Heart right ventricle (tissue), 16 donors: ENCODE measurements at regions of chr20 and their contacts with region 1.

Region 1: GRCh38 chr20:47886460-47887041 is 101.3 kb upstream of the SULF2 start:
- DNase-seq: no peak
- ATAC-seq: no peak
- H3K4me3 ChIP-seq: no peak overlapping the region
- H3K27ac ChIP-seq: no peak overlapping the region
- H3K4me1 ChIP-seq: no peaks in the 10 kb centered on the region
- H3K27me3 ChIP-seq: peaks cover 0 to 27% (median 12%) of the 10 kb centered on the region in 7 donors
- CTCF ChIP-seq: no peak

Region 2: GRCh38 chr20:47772995-47773716 is 113.4 kb before region 1 on chr20:
- intact Hi-C with region 1: no loop called
- DNase-seq: peak; percentile 54 to 58
- ATAC-seq: peak; percentile 61 to 88 (median 80)
- H3K4me3 ChIP-seq: no peak overlapping the region
- H3K27ac ChIP-seq: peak overlapping the region in 9 of 10 donors; percentile 53 to 85 (median 72)
- H3K4me1 ChIP-seq: peaks cover 0 to 79% (median 46%) of the 10 kb centered on the region in 9 donors
- H3K27me3 ChIP-seq: peaks cover 0 to 7% (median 0%) of the 10 kb centered on the region in 7 donors
- CTCF ChIP-seq: no peak

Region 3: GRCh38 chr20:47809913-47810622 is 76.5 kb before region 1 on chr20:
- intact Hi-C with region 1: loop called in 4 of 10 experiments (anchors 10 kb)
- DNase-seq: no peak
- ATAC-seq: no peak
- H3K4me3 ChIP-seq: no peak overlapping the region
- H3K27ac ChIP-seq: no peak overlapping the region
- H3K4me1 ChIP-seq: no peaks in the 10 kb centered on the region
- H3K27me3 ChIP-seq: peaks cover 4 to 85% (median 80%) of the 10 kb centered on the region in 7 donors
- CTCF ChIP-seq: no peak

Region 4: DNA sequence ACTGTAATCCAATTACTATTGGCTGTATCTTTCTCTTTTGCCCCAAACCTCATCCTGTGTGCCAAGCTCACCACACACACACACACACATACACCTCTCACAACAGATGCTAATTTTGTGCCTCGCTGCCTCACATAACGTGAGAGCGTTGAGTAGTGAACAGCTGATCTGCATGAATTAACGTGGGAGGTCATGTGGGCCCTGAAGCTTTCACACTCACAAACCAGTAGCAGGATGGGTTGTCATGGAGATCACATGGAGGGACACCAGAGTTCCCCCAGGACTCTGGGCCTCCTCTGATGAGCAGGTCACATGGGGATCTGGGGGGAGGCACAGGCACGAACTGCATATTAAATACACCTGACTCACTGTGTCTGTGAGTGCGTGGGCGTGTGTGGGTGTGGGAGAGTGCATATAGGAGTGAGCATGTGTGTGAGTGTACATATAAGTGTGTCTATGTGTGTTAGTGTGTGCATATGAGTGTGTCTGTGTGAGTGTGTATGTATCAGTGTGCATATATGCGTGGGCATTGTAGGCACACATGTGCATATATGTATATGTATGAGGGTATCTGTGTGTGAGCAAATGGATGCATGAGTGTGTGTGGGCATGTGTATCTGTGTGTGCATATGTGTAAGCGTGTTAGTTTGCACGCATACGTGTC is 38.6 kb before region 1 on chr20:
- intact Hi-C with region 1: loop called in 2 of 10 experiments (anchors 10 kb)
- DNase-seq: no peak
- ATAC-seq: no peak
- H3K4me3 ChIP-seq: no peak overlapping the region
- H3K27ac ChIP-seq: peak overlapping the region in 1 of 10 donors; percentile 6
- H3K4me1 ChIP-seq: peaks cover 0 to 8% (median 0%) of the 10 kb centered on the region in 9 donors
- H3K27me3 ChIP-seq: peaks cover 0 to 41% (median 10%) of the 10 kb centered on the region in 7 donors
- CTCF ChIP-seq: no peak

Region 5: DNA sequence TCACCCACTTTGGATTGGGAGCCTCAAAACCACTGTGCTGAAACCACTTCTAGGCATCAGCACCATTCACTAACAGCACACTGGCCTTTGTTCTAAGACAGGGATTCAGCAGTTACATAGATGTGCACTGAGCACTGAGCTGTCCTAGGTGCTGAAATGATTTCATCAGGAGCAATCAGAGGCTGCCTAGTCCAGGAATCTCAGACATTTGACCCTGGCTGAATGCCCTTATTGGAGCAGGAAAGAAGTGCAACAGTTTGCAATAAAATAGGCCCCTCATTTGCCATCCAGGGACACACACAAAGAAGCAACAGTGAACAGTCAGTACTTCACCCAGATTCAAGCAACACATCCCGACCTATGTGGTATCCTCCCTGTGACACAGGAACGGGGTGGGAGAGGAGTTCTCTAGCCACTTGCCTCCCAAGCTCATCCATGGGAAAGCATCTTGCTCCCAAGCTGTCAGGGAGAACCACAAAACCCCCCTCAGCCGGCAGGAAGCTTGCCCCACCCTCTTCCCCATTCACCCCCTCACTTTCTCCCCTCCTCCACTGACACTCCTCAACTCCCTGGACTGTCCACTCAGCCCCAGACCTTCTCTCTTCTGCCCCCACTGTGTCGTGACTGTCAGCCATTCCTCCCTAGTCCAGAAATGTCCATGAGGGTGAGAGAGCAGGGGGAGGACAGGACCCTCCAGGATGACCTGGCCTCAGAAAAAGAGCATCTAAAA is 636.8 kb after region 1 on chr20:
- intact Hi-C with region 1: loop called in 6 of 10 experiments (anchors 5 to 10 kb)
- DNase-seq: peak in 1 of 2 donors; percentile 35
- ATAC-seq: peak in 4 of 8 donors; percentile 38 to 64 (median 57)
- H3K4me3 ChIP-seq: no peak overlapping the region
- H3K27ac ChIP-seq: no peak overlapping the region
- H3K4me1 ChIP-seq: no peaks in the 10 kb centered on the region
- H3K27me3 ChIP-seq: peaks cover 0 to 16% (median 6%) of the 10 kb centered on the region in 7 donors
- CTCF ChIP-seq: no peak